Panc1 (cell line): ENCODE measurements at regions of chr16 and their contacts with region 1.

Region 1: DNA sequence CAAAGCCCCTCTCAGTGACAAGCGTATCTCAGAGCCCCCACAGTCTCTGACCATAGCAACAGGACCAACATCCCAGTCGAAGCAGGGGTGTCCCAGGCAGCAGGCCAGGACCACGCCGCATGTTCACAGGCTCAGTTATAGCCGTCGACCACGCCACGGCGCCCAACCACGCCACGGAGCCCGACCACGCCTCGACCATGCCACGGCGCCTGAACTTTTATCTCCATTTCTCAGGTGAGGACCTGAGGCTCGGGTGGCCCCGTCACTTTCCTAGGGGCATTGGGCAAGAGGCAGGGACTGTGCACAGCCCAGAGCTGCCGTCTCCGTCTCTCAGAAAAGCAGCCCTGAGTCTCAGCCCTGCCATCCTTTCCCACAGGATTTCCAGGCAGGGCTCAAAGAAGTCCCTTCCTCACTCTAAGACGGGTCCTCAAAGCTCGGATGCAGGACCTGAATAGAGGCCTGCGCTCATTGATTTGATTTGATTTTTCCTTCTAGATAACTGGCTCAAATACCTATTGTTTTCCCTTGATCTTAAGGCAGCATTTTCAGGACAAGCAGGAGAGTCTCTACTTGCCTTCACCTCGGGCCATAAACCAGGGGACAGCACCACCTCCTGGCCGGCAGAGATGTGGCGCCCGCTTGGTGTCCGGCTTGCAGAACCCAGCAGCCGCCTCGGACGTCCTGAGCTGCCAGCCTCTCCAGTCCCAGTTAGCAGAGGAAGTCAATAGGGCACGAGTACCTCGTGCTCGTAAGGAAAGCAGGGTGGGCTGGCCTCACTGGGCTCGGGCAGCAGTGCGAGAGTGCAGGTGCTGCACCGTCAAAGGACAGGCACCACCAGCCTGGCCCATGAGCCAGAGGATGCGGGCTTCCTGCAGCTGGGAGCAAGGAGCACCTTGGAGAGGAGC is 38.7 kb downstream of the C16orf95 start:
- DNase-seq: peak; percentile 24
- ATAC-seq: peak; percentile 98
- H3K4me3 ChIP-seq: 0 out of 4 replicates have a peak overlapping the region, but pooled peaks of 1 of the 2 experiments have one; percentile 11
- H3K27ac ChIP-seq: no peak overlapping the region
- H3K4me1 ChIP-seq: no peaks in the 10 kb centered on the region; the same call in 1 of the 2 replicates
- H3K27me3 ChIP-seq: no peaks in the 10 kb centered on the region
- CTCF ChIP-seq: peak; percentile 86

Region 2: DNA sequence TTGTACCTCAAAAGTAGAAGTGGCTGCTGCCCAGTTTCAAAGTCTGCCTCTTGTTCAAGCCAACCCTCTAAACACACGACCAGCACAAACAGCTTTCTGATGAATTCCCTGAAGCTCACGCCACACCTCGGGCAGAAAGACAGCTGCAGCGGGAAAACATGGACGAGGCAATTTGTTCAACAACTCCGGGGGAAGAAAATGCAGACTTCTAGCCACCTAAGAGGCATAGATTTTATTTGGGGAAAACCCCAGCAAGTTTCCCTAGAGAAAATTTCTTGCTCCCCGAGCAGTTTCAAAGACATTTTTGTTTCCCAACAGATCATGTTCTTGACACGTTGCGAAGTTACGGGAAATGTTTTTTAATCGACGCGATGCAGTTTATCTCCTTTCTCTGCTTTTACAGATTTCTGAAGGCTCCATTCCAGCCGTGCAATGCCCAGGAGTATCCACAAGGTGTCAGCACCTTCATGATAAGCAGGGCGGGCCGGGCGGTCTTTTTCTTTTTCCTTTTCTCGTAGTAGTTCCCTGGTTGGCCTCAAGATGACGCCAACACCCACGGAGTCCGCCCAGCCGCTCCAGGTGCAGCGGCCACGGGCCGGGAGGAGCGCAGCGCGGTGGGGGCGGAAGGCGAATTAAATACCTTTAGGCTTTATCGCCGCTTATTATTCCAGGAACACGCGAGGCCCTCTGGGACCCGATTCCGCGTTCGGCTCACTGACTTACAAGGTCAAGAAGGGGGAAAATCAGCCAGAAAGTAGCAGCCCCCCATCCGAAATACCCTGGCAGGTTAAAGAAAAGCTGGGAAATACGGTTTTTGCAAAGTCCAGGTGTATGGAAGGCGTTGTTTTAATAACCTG is 714.7 kb before region 1 on chr16:
- CTCF ChIA-PET with region 1: no interaction called
- POLR2A ChIA-PET with region 1: no interaction called
- in situ Hi-C with region 1: no loop called
- intact Hi-C with region 1: loop called (anchors 5 kb)
- DNase-seq: no peak
- ATAC-seq: peak; percentile 26
- H3K4me3 ChIP-seq: peak overlapping the region; percentile 47 to 77
- H3K27ac ChIP-seq: peak overlapping the region; percentile 89
- H3K4me1 ChIP-seq: peaks cover 17% of the 10 kb centered on the region
- H3K27me3 ChIP-seq: no peaks in the 10 kb centered on the region
- CTCF ChIP-seq: peak; percentile 100

Region 3: GRCh38 chr16:87098976-87099720 is 179.3 kb before region 1 on chr16:
- CTCF ChIA-PET with region 1: no interaction called
- POLR2A ChIA-PET with region 1: no interaction called
- in situ Hi-C with region 1: no loop called
- intact Hi-C with region 1: no loop called
- DNase-seq: no peak
- ATAC-seq: no peak
- H3K4me3 ChIP-seq: no peak overlapping the region
- H3K27ac ChIP-seq: no peak overlapping the region
- H3K4me1 ChIP-seq: no peaks in the 10 kb centered on the region
- H3K27me3 ChIP-seq: no peaks in the 10 kb centered on the region
- CTCF ChIP-seq: no peak

Region 4: GRCh38 chr16:87203060-87203656 is 75.3 kb before region 1 on chr16:
- CTCF ChIA-PET with region 1: interaction called, 9 read pairs
- POLR2A ChIA-PET with region 1: no interaction called
- in situ Hi-C with region 1: no loop called
- intact Hi-C with region 1: loop called (anchors 2 kb)
- DNase-seq: peak; percentile 43
- ATAC-seq: peak; percentile 95
- H3K4me3 ChIP-seq: no peak overlapping the region
- H3K27ac ChIP-seq: no peak overlapping the region
- H3K4me1 ChIP-seq: no peaks in the 10 kb centered on the region
- H3K27me3 ChIP-seq: no peaks in the 10 kb centered on the region
- CTCF ChIP-seq: peak; percentile 88

Region 5: DNA sequence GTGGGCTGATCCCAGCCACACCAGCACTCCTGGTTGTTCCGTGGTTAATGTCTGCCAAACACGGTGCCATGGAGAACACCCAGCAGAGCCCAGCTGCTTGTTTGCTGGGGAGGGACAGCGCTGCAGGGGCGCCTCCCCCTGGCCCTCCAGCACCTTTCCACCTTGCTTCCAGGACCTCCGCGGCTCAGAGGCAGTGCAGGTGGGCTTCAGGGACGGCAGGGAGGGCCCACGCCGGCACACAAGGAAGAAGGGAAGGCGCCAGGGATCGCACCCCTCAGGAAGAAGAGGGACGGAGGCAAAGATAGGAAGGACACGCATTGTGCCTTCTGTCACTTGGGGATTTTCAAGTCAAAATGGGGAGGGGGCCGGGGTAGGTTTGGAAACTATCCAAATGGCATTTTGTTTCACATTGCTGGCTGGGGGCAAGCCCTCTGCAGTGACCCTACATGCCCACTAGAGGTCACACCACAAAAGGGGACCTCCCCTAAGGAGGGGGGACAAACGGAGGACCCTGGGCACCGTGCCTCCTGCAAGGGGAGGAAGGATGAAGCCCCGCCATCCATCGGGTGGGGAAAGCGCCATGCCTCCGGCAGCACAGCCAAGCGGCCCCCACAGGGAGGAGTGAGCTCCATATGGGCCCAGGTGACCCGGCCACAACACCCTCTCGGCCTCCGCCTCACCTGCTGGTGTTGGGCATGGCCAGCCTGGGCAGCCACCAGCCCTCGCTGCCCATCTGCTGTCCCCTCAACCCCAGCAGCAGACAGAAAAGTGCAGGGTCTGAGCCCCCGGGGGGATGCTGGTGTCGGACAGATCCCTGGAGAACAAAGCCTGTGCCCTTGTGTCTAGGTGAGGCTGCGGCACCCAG is 46.2 kb after region 1 on chr16:
- CTCF ChIA-PET with region 1: no interaction called
- POLR2A ChIA-PET with region 1: no interaction called
- in situ Hi-C with region 1: no loop called
- intact Hi-C with region 1: no loop called
- DNase-seq: no peak
- ATAC-seq: peak; percentile 70
- H3K4me3 ChIP-seq: no peak overlapping the region
- H3K27ac ChIP-seq: no peak overlapping the region
- H3K4me1 ChIP-seq: no peaks in the 10 kb centered on the region
- H3K27me3 ChIP-seq: no peaks in the 10 kb centered on the region
- CTCF ChIP-seq: peak; percentile 84

Region 6: DNA sequence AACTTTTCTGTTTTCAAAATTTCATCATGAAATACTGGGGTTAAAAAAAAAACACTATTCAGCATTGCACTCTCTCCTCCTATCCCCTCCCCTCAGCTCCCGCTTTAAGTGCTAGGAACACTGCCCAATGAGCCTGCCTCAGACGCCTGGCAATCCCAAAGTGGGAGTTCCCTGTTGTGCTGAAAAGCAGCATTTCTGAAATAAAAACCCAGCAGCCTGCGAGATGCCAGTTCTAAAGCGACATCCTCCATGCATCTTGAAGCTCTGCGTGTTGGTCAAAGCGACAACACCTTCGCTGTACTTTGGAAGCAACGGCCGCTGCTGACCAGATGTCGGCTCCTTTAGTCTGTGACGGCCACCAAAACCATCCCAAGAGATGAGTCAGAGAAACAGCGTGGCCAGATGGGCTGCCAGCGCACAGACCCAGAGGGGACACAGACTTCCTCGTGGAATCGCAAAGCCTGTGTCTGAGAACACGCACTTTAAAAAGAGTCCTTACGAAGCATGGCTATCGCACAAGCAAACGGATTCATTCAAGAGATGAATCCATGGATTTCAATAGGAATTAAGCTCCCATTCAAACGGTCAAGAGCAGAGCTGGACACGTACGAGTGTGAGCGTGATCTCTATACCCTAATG is 72.4 kb after region 1 on chr16:
- CTCF ChIA-PET with region 1: no interaction called
- POLR2A ChIA-PET with region 1: no interaction called
- in situ Hi-C with region 1: no loop called
- intact Hi-C with region 1: no loop called
- DNase-seq: no peak
- ATAC-seq: no peak
- H3K4me3 ChIP-seq: no peak overlapping the region
- H3K27ac ChIP-seq: no peak overlapping the region
- H3K4me1 ChIP-seq: no peaks in the 10 kb centered on the region
- H3K27me3 ChIP-seq: no peaks in the 10 kb centered on the region
- CTCF ChIP-seq: no peak

Region 7: DNA sequence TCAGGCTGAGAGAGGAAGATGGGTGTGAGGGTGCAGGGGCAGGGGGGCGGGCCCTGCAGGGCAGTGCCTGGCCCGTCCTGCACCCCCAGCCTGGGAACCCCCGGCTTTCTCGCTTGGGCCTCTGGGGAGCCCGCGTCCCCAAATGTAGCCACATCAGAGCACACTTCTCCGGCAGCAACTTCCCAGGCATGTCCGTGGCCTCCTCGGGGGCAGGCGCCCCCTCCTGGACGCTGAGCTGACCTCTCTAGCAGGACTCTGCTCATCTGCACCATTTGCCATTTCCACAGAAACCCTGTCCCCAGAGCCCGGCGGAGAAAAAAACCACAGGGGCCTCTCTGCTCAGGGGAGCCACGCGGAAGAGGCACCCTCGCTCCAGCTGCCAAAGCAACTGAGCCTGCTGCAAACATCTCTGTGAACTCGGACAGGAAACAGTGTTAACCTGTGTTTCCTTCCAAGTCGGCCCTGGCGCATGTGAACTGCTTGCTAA is 423.9 kb after region 1 on chr16:
- CTCF ChIA-PET with region 1: no interaction called
- POLR2A ChIA-PET with region 1: no interaction called
- in situ Hi-C with region 1: no loop called
- intact Hi-C with region 1: no loop called
- DNase-seq: no peak
- ATAC-seq: peak; percentile 65; the same call in 1 of the 2 replicates
- H3K4me3 ChIP-seq: no peak overlapping the region
- H3K27ac ChIP-seq: no peak overlapping the region
- H3K4me1 ChIP-seq: no peaks in the 10 kb centered on the region
- H3K27me3 ChIP-seq: no peaks in the 10 kb centered on the region
- CTCF ChIP-seq: peak; percentile 78